ENCODE measurements at regions of chr6 and their contacts with region 1.

Region 1: GRCh38 chr6:88780714-88781389 is 182.6 kb downstream of the RNGTT start:
- DNase-seq: peak; percentile 63
- ATAC-seq: peak; percentile 90
- H3K4me3 ChIP-seq: no peak overlapping the region
- H3K27ac ChIP-seq: no peak overlapping the region
- H3K4me1 ChIP-seq: no peaks in the 10 kb centered on the region
- H3K27me3 ChIP-seq: no peaks in the 10 kb centered on the region
- CTCF ChIP-seq: peak; percentile 60 to 68 (median 67); a peak in 5 of 6 replicates
- EP300 ChIP-seq: no peak
- POLR2A ChIP-seq: no peak
- RAD21 ChIP-seq: peak; percentile 88

Region 2: GRCh38 chr6:87682310-87682709 is 1098.5 kb before region 1 on chr6:
- CTCF ChIA-PET with region 1: no interaction called
- POLR2A ChIA-PET with region 1: interaction called, 11 read pairs
- RAD21 ChIA-PET with region 1: no interaction called
- SMC1A ChIA-PET with region 1: no interaction called
- in situ Hi-C with region 1: no loop called
- intact Hi-C with region 1: no loop called
- DNase-seq: no peak
- ATAC-seq: peak; percentile 82
- H3K4me3 ChIP-seq: no peak overlapping the region
- H3K27ac ChIP-seq: peak overlapping the region; percentile 70
- H3K4me1 ChIP-seq: peaks cover 20% of the 10 kb centered on the region
- H3K27me3 ChIP-seq: no peaks in the 10 kb centered on the region
- CTCF ChIP-seq: no peak
- EP300 ChIP-seq: peak in 1 of 2 experiments; percentile 69; a peak in 1 of 4 replicates
- POLR2A ChIP-seq: no peak
- RAD21 ChIP-seq: no peak

Region 3: DNA sequence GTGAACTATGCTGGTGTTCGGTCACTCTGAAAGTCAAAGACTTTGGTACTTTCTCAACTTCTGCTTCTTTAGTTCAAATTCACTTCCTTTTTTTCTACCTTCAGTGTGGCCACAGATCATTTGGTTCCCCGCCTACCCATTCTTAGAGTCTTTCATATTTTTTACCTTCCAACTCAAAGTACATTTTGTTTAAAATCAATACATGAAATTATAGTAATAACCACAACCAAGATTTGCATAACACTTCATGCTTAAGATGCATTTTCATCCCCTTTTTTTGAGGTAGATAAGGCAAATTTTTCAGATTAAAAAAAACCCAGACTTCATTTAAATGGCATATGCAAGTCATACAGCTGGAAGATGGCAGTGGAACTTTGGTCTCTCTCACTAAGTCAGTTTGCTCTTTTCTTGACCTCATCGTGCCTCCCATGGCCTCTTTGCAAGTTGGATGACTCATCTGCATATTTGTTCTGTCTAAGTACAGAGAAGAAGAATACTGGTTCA is 602.8 kb before region 1 on chr6:
- CTCF ChIA-PET with region 1: interaction called, 4 read pairs
- POLR2A ChIA-PET with region 1: interaction called, 10 read pairs
- RAD21 ChIA-PET with region 1: interaction called, 3 read pairs
- SMC1A ChIA-PET with region 1: interaction called, 3 read pairs
- in situ Hi-C with region 1: no loop called
- intact Hi-C with region 1: no loop called
- DNase-seq: peak; percentile 32
- ATAC-seq: peak; percentile 75
- H3K4me3 ChIP-seq: no peak overlapping the region
- H3K27ac ChIP-seq: no peak overlapping the region
- H3K4me1 ChIP-seq: peaks cover 16% of the 10 kb centered on the region; the same call in 1 of the 2 replicates
- H3K27me3 ChIP-seq: no peaks in the 10 kb centered on the region
- CTCF ChIP-seq: no peak
- EP300 ChIP-seq: no peak
- POLR2A ChIP-seq: no peak
- RAD21 ChIP-seq: no peak

Region 4: DNA sequence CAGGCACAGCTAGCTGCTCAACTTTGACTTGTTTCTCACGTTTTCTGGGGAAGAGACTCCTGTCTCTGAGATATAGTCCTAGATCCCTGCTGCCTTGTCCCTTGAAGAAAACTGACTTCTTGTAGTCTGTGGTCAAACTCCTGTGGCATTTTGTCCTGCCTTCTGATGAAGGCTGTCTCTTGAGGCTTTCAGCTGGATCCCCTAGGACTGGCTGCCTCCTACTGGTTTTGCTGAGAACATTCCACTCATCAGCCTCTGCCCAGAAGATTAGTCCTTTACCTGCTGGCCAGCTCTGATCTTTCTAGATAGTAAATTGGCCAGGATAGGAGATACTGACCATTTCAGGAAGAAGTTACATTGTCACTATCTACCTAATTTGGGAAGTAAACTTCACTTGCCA is 542.8 kb before region 1 on chr6:
- CTCF ChIA-PET with region 1: interaction called, 7 read pairs
- POLR2A ChIA-PET with region 1: no interaction called
- RAD21 ChIA-PET with region 1: no interaction called
- SMC1A ChIA-PET with region 1: interaction called, 4 read pairs
- in situ Hi-C with region 1: no loop called
- intact Hi-C with region 1: loop called (anchors 2 kb)
- DNase-seq: peak; percentile 33
- ATAC-seq: peak; percentile 92
- H3K4me3 ChIP-seq: no peak overlapping the region
- H3K27ac ChIP-seq: no peak overlapping the region
- H3K4me1 ChIP-seq: peaks cover 3% of the 10 kb centered on the region; the same call in 1 of the 2 replicates
- H3K27me3 ChIP-seq: no peaks in the 10 kb centered on the region
- CTCF ChIP-seq: peak; percentile 64 to 77 (median 66); a peak in 5 of 6 replicates
- EP300 ChIP-seq: no peak
- POLR2A ChIP-seq: no peak
- RAD21 ChIP-seq: peak; percentile 97